Right ventricle myocardium inferior (tissue), 1 donor: ENCODE measurements at regions of chr15 and their contacts with region 1.

Region 1: DNA sequence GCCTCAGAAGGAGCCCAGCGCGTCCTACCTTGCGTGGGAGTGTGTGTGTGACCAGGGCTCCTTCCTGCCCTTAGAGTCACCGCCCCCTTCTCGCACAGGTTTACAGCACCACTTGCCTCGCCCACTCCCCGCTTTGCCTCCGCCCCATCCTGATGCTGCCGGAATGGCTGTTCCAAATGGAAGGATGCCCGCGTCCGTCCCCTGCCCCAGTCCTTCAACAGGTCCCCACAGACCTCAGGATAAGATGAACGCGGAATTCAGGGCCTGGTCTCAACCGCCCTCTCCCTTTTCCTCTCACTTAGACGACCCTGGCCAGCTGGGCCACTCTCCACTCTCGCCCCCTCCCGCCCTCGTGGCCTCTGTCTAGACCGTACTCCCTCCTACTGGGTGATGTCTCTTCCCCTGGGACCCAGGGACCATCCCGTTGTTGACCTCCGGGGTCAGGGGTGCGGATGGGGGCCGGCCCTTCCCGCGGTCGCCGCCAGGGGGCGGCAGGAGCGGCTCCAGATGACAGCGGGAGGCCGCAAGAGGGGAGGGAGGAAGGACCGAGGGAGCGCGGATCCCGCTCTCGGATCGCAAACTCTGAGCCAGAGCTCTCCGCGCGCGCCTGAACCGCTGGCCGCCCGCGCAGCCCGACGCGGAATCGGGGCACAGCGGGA is at the start of gene THSD4:
- DNase-seq: peak; percentile 76
- ATAC-seq: peak; percentile 64
- total RNA-seq, gene THSD4: 73.1 TPM

Region 2: DNA sequence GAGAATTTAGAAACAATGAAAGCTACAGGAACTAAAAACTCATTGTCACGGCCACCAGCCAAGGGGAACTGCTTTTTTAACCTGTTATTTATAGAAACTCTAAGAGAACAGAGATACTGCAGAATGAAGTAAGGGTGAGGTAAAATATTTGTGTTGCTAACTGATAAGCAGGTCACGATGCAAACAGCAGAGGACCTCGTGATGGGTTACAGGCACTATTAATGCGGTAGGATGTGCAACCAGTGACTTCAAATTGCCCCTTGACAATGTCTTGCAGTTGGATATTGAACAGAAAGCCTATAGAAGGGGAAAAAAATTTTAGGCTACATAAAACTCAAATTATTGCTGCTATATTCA is 53.4 kb after region 1 on chr15:
- intact Hi-C with region 1: loop called (anchors 5 kb)
- DNase-seq: no peak
- ATAC-seq: peak; percentile 91

Region 3: GRCh38 chr15:71237456-71238188 is 122.6 kb after region 1 on chr15:
- intact Hi-C with region 1: loop called (anchors 5 kb)
- DNase-seq: peak; percentile 89
- ATAC-seq: peak; percentile 92

Region 4: GRCh38 chr15:71329497-71330260 is 214.7 kb after region 1 on chr15:
- intact Hi-C with region 1: loop called (anchors 5 kb)
- DNase-seq: no peak
- ATAC-seq: peak; percentile 47

Region 5: DNA sequence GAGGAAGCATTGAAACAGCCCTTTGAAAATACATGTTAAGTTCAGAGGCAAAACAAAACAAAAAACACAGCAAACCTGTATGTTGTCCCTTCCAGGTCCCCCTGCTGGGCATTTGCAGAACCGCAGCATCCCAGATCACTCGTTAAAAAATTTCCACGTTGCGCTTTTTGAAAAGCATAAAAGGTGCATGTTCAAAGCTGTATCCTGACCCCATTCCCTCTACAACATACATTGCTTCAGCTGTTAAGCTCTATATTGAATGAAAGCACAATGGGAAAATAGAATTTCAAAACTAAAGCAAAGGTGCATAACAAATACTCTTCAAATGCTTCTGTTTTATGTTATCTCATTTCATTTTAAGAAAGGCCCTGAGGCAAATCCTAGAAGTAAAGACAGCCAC is 328.5 kb after region 1 on chr15:
- intact Hi-C with region 1: loop called (anchors 2 kb)
- DNase-seq: no peak
- ATAC-seq: no peak